ENCODE measurements at regions of chr18 and their contacts with region 1.

Region 1: GRCh38 chr18:55861266-55861665 is 273.3 kb upstream of the TCF4 start:
- DNase-seq: no peak
- ATAC-seq: no peak

Region 2: GRCh38 chr18:56083097-56083521 is 221.8 kb after region 1 on chr18:
- intact Hi-C with region 1: loop called (anchors 10 kb)
- DNase-seq: peak; percentile 76
- ATAC-seq: peak; percentile 84